AG04450 (cell line): ENCODE measurements at regions of chr12 and their contacts with region 1.

Region 1: GRCh38 chr12:69639400-69640016 is 28.8 kb upstream of the LRRC10 start:
- DNase-seq: peak; percentile 34
- H3K4me3 ChIP-seq: no peak overlapping the region
- H3K27ac ChIP-seq: no peak overlapping the region
- H3K27me3 ChIP-seq: no peaks in the 10 kb centered on the region
- CTCF ChIP-seq: peak; percentile 91

Region 2: DNA sequence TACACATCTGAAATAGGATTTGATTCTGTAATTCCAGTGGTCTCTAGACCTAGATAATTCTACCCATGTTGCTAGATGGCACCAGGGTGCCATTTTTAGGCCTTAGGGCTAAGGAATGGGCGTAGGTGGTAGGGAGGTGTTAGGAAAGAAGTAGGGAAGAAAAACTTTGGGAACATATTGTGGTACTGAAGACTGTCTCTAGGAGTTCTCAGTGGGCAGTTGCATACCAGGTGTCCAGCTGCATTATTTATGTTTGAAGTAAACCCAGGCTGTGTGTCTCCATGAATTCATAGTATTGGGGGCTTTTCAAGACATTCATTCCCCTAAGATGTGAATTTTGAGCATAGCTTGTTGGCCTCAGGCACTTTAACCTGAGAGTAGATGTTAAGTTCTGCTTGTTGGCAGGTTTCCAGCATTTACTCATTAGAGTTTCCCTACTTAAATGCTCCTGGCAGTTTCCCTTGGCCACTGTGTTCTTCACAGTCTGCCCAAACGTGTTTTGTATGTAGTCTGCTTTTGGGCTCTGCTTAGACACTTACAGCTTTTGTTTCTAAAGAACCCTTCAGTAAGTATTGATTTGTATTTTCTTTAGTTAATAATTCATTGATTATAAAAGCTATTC is 85.8 kb before region 1 on chr12:
- CTCF ChIA-PET with region 1: interaction called, 12 read pairs
- POLR2A ChIA-PET with region 1: no interaction called
- DNase-seq: no peak
- H3K4me3 ChIP-seq: no peak overlapping the region
- H3K27ac ChIP-seq: no peak overlapping the region
- H3K27me3 ChIP-seq: no peaks in the 10 kb centered on the region
- CTCF ChIP-seq: no peak

Region 3: DNA sequence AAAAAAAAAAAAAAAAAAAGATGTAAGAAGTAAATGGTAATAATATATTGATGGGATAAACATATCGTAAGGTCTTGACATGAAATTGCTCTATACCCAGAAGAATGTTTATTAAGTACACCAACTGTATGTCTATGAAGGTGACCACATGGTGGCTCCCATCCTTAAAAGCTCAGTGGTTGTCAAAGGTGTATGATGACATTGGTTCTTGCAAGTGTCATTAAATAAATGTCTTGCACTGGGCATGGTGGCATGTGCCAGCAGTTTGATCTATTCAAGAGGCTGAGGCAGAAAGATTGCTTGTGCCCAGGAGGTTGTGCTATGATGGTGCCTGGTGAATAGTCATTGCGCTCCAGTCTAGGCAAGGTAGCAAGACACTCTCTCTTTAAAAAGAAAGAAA is 43.8 kb before region 1 on chr12:
- CTCF ChIA-PET with region 1: interaction called, 13 read pairs
- POLR2A ChIA-PET with region 1: no interaction called
- DNase-seq: no peak
- H3K4me3 ChIP-seq: no peak overlapping the region
- H3K27ac ChIP-seq: no peak overlapping the region
- H3K27me3 ChIP-seq: no peaks in the 10 kb centered on the region
- CTCF ChIP-seq: no peak

Region 4: GRCh38 chr12:69616025-69616424 is 23.5 kb before region 1 on chr12:
- CTCF ChIA-PET with region 1: interaction called, 48 read pairs
- POLR2A ChIA-PET with region 1: no interaction called
- DNase-seq: no peak
- H3K4me3 ChIP-seq: no peak overlapping the region
- H3K27ac ChIP-seq: no peak overlapping the region
- H3K27me3 ChIP-seq: peaks cover 5% of the 10 kb centered on the region
- CTCF ChIP-seq: no peak

Region 5: GRCh38 chr12:69655377-69656336 is 16.1 kb after region 1 on chr12:
- CTCF ChIA-PET with region 1: interaction called, 39 read pairs
- POLR2A ChIA-PET with region 1: interaction called, 3 read pairs
- DNase-seq: peak; percentile 56
- H3K4me3 ChIP-seq: no peak overlapping the region
- H3K27ac ChIP-seq: peak overlapping the region; percentile 93
- H3K27me3 ChIP-seq: no peaks in the 10 kb centered on the region
- CTCF ChIP-seq: no peak

Region 6: GRCh38 chr12:69738351-69739286 is 99.1 kb after region 1 on chr12 and contains the start of gene RAB3IP:
- CTCF ChIA-PET with region 1: interaction called, 14 read pairs
- POLR2A ChIA-PET with region 1: no interaction called
- DNase-seq: peak; percentile 30
- H3K4me3 ChIP-seq: peak within 1 kb of the TSS; percentile 66
- H3K27ac ChIP-seq: no peak within 1 kb of the TSS
- H3K27me3 ChIP-seq: peaks cover 29% of the 10 kb centered on the region
- CTCF ChIP-seq: peak; percentile 45; the same call in 1 of the 2 replicates
- polyA plus RNA-seq, gene RAB3IP: 2.6 and 3.1 TPM in 2 replicates